Activated CD4-positive, alpha-beta T cell treated with anti-CD3 and anti-CD28 coated beads for 36 hours (primary cell): ENCODE measurements at regions of chr12 and their contacts with region 1.

Region 1: GRCh38 chr12:47705566-47706425 is at the start of gene RPAP3:
- DNase-seq: peak; percentile 100
- ATAC-seq: peak; percentile 92
- H3K4me3 Mint-ChIP-seq: peak within 1 kb of the TSS; percentile 89
- H3K27ac Mint-ChIP-seq: peak within 1 kb of the TSS; percentile 99
- H3K4me1 Mint-ChIP-seq: peaks cover 46% of the 10 kb centered on the region
- H3K27me3 Mint-ChIP-seq: no peaks in the 10 kb centered on the region
- total RNA-seq, gene RPAP3: 55.3 to 62.8 TPM

Region 2: DNA sequence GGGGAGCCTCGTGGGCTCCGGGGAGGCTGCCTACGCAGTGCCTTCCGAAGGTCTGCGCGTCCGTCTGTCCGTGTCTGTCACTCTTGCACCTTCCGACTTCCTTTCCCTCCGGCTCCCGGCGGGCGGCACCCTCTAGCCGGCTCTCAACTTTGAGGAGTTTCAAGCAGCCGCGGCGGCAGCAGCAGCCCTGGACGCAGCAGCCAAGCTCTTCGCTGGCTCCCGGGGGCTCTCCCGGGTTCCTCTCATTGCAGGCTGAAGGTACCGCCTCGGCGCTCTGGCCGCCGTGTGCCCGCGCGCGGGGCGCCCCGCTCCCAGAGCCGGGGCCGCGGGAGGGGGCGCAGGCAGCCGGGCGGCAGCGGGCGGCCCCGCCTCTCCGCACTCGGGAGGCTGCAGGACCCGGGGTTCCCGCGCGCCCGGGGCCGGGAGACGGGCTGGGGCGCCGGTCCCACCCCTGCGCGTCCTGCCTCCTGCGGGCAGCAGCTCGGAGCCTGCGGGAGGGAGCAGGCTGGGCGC is 626.3 kb before region 1 on chr12 and contains the starts of genes AMIGO2 and PCED1B:
- CTCF ChIA-PET with region 1: no interaction called
- POLR2A ChIA-PET with region 1: interaction called, 6 read pairs
- intact Hi-C with region 1: loop called in 1 of 2 experiments (anchors 1 kb)
- DNase-seq: peak; percentile 85
- ATAC-seq: peak; percentile 59
- H3K4me3 Mint-ChIP-seq: peak within 1 kb of the TSS; percentile 96
- H3K27ac Mint-ChIP-seq: peak within 1 kb of the TSS; percentile 96
- H3K4me1 Mint-ChIP-seq: peaks cover 73% of the 10 kb centered on the region
- H3K27me3 Mint-ChIP-seq: no peaks in the 10 kb centered on the region
- total RNA-seq, gene AMIGO2: 15.1 to 17.1 TPM
- total RNA-seq, gene PCED1B: 76.3 to 82.3 TPM

Region 3: GRCh38 chr12:47488888-47489287 is 216.9 kb before region 1 on chr12:
- CTCF ChIA-PET with region 1: no interaction called
- POLR2A ChIA-PET with region 1: no interaction called
- intact Hi-C with region 1: no loop called
- DNase-seq: no peak
- ATAC-seq: no peak
- H3K4me3 Mint-ChIP-seq: no peak overlapping the region
- H3K27ac Mint-ChIP-seq: no peak overlapping the region
- H3K4me1 Mint-ChIP-seq: peaks cover 12% of the 10 kb centered on the region
- H3K27me3 Mint-ChIP-seq: no peaks in the 10 kb centered on the region

Region 4: DNA sequence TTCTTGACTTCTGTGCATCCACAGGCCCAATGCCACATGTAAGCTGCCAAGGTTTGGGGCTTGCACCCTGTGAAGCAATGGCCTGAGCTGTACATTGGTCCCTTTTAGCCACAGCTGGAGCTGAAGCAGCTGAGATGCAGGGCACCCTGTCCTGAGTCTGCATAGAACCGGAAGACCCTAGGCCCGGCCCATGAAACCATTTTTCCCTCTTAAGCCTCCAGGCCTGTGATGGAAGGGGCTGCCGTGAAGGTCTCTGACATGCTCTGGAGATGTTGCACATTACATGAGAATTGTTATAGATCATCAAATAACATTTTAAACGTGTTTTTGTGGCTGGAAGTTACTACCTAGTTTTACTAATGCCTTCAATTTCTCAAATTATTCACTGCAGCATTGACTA is 188.7 kb before region 1 on chr12:
- CTCF ChIA-PET with region 1: no interaction called
- POLR2A ChIA-PET with region 1: no interaction called
- intact Hi-C with region 1: no loop called
- DNase-seq: no peak
- ATAC-seq: no peak
- H3K4me3 Mint-ChIP-seq: no peak overlapping the region
- H3K27ac Mint-ChIP-seq: no peak overlapping the region
- H3K4me1 Mint-ChIP-seq: no peaks in the 10 kb centered on the region
- H3K27me3 Mint-ChIP-seq: no peaks in the 10 kb centered on the region

Region 5: DNA sequence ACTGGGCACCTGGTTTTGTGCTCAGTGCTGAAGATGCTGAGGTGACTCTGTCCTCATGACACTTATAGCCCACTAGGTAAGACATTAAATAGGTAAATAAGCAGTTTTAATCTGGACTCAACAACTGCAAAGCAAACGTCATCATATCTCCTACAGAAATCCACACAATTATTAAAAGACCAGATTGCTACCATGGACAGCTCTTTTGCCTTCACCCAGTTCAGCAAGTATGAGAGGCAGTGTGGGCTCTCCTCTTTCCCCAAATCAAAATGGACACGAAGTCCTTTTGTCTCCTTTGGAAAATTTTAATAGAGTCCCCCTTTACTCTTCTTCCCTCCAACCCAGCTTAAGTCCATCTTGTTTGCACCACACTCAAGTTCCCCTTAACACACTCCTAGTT is 171.1 kb before region 1 on chr12:
- CTCF ChIA-PET with region 1: no interaction called
- POLR2A ChIA-PET with region 1: no interaction called
- intact Hi-C with region 1: no loop called
- DNase-seq: no peak
- ATAC-seq: no peak
- H3K4me3 Mint-ChIP-seq: no peak overlapping the region
- H3K27ac Mint-ChIP-seq: no peak overlapping the region
- H3K4me1 Mint-ChIP-seq: peaks cover 5% of the 10 kb centered on the region
- H3K27me3 Mint-ChIP-seq: peaks cover 5% of the 10 kb centered on the region

Region 6: GRCh38 chr12:47779301-47779942 is 73.6 kb after region 1 on chr12:
- CTCF ChIA-PET with region 1: interaction called, 341 read pairs
- POLR2A ChIA-PET with region 1: no interaction called
- intact Hi-C with region 1: no loop called
- DNase-seq: peak; percentile 96
- ATAC-seq: peak; percentile 82
- H3K4me3 Mint-ChIP-seq: no peak overlapping the region
- H3K27ac Mint-ChIP-seq: peak overlapping the region; percentile 37
- H3K4me1 Mint-ChIP-seq: peaks cover 29% of the 10 kb centered on the region
- H3K27me3 Mint-ChIP-seq: no peaks in the 10 kb centered on the region

Region 7: GRCh38 chr12:47863467-47863866 is 157.7 kb after region 1 on chr12:
- CTCF ChIA-PET with region 1: interaction called, 4 read pairs
- POLR2A ChIA-PET with region 1: no interaction called
- intact Hi-C with region 1: loop called in 1 of 2 experiments (anchors 1 kb)
- DNase-seq: no peak
- ATAC-seq: no peak
- H3K4me3 Mint-ChIP-seq: no peak overlapping the region
- H3K27ac Mint-ChIP-seq: peak overlapping the region; percentile 31
- H3K4me1 Mint-ChIP-seq: peaks cover 73% of the 10 kb centered on the region
- H3K27me3 Mint-ChIP-seq: no peaks in the 10 kb centered on the region

Region 8: DNA sequence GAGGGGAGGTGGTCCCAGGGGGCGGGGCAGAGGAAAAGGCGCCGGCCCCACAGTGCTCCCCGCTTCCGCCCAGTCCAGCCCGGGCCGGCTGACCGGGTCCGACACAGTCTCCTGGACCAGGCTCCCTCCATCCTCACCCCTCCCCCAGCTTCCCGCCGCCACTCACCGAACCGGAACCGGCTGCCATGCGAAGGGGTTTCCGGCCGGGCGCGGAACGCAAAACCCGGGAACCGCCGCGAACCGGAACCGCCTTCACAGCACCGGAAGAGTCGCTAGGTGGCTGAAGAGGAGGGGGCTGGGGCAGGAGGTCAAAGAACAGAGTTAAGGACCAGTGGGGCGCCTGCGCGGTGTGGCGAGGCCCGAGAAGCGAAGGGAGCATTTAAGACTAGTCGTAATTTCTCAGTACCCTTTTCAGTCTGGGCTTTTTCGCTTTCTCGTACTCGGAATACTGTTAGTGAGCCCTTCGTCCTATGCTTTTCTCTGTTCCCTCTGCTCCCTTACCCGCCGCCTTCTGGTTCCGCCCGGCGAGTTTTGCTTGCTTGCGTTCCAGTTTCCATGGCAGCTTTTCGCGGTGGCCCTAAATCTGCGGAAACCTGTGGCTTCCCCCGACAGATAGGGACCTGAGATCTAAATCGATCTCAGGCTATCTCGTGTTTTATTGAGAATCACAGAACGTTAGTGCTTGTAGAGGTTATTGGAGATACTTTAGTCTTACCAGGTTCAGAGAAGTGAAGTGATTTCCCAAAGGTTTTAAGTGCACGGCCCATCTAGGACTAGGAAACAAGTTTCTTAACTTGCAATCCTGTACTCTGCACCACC is 400.3 kb after region 1 on chr12 and contains the start of gene SENP1:
- CTCF ChIA-PET with region 1: no interaction called
- POLR2A ChIA-PET with region 1: no interaction called
- intact Hi-C with region 1: loop called in 1 of 2 experiments (anchors 5 kb)
- DNase-seq: peak; percentile 94
- ATAC-seq: peak; percentile 87
- H3K4me3 Mint-ChIP-seq: peak within 1 kb of the TSS; percentile 95
- H3K27ac Mint-ChIP-seq: peak within 1 kb of the TSS; percentile 98
- H3K4me1 Mint-ChIP-seq: peaks cover 46% of the 10 kb centered on the region
- H3K27me3 Mint-ChIP-seq: no peaks in the 10 kb centered on the region
- total RNA-seq, gene SENP1: 44.4 to 61.8 TPM

Region 9: DNA sequence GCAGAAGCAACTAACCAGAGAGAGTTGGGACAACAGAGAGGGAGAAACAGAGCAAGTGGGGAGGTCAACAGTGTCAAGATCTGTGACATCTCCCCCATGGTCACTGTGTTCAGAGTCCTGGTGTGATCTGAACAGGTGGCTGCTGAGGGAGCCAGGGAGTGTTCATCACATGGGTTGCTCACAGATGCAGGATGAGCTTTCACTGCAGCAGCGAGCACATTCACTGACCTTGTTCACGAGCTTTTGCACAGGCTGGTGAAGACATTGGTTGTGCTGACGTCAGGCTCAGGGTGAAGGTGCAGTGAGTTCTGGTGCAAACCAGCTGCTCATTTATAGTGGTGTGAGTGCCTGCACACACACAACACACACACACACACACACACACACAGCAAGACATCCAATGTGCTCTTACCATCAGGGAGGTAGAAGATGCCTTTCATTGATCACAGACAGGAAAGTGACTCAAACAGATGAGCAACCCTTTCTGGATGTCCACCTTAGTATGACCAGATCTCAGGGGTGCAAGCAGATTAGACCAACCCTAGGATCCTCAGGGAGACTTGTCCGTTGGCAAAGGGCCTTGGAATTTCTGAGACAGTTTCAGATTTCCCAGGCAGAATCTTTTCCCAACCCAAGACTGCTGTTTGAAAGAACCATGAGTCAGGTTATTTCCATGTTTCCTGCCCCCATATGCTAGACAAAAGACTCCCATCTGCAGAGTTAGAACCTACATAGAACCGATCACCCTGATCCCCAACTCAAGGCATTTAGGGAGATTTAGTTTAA is 541.6 kb after region 1 on chr12:
- CTCF ChIA-PET with region 1: no interaction called
- POLR2A ChIA-PET with region 1: no interaction called
- intact Hi-C with region 1: no loop called
- DNase-seq: no peak
- ATAC-seq: no peak
- H3K4me3 Mint-ChIP-seq: no peak overlapping the region
- H3K27ac Mint-ChIP-seq: no peak overlapping the region
- H3K4me1 Mint-ChIP-seq: no peaks in the 10 kb centered on the region
- H3K27me3 Mint-ChIP-seq: peaks cover 2% of the 10 kb centered on the region

Region 10: DNA sequence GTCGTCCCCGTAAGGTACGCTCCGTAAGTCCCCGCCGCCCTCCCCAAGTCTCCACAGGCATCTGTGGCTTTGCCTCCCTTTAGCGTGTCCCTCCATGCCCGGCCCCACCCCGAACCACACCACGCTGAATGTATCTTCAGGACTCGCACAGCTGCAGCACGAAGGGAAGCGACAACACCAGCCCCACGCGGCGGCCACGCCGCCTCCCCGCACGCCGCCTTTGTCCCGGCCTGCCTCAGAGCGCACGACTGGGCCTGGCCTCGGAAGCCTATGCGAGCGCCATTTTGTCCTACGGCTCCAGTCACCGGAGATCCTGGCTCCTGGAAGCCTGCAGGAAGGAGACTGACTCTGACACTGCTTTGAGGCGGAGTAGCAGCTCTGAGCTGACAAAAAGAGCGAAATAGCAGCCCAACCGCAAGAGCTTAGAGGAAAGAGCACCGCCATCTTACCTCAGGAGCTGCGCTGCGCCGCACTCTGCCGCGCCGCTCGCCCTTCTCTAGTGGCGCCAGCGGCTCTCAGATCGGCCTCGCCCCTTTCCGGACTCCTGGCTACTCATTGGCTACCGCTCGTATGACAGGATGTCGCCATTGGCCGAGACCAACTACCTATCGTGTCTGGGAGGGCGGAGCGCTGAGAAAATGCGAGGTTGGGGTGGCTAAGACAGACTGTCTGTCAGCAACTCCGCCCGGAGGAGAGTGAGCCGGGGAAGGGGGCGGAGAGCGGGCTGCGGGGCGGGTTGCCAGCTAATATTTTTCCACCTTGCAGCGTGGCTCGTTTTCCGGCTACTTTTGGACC is 976.1 kb after region 1 on chr12 and contains the start of gene KANSL2:
- CTCF ChIA-PET with region 1: no interaction called
- POLR2A ChIA-PET with region 1: no interaction called
- intact Hi-C with region 1: loop called in 1 of 2 experiments (anchors 1 kb)
- DNase-seq: peak; percentile 99
- ATAC-seq: peak; percentile 96
- H3K4me3 Mint-ChIP-seq: peak within 1 kb of the TSS; percentile 87
- H3K27ac Mint-ChIP-seq: peak within 1 kb of the TSS; percentile 91
- H3K4me1 Mint-ChIP-seq: peaks cover 41% of the 10 kb centered on the region
- H3K27me3 Mint-ChIP-seq: no peaks in the 10 kb centered on the region
- total RNA-seq, gene KANSL2: 44.0 to 59.8 TPM